ENCODE measurements at regions of chr6 and their contacts with region 1.

Region 1: DNA sequence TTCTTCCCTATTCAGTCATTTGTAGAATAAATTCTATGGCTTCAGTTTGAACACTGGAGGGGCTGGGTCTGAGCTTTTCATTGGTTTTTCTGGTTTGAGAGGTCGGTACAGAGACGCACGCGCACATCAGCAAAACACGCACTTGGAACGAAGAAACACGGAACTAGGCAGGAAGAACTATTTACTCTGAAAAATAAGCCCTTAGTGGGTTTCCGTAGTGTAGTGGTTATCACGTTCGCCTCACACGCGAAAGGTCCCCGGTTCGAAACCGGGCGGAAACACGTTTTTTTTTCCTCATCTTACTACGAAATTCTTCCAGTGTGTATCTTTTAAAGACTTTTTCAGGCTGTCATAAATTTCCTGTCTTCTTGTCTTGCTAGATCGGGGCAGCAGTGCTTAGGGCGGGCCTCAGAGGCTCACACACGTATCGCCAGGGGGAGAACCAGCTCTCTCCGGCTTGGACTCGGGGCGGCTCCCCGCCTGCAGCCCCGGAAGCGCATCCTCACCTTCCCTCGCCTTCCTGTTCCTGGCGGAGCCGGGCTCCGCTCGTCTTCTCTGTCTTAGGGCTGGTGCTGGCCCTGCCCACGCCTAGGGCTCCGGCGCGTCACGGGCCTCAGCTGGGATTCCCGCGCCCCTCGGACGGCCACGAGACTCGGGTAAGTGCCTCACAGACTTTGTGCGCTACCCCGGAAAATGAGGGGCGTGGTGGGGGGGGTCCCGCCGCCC is at the start of gene HMGN4:
- DNase-seq: peak; percentile 93
- total RNA-seq, gene HMGN4: 136 and 165 TPM in 2 replicates

Region 2: DNA sequence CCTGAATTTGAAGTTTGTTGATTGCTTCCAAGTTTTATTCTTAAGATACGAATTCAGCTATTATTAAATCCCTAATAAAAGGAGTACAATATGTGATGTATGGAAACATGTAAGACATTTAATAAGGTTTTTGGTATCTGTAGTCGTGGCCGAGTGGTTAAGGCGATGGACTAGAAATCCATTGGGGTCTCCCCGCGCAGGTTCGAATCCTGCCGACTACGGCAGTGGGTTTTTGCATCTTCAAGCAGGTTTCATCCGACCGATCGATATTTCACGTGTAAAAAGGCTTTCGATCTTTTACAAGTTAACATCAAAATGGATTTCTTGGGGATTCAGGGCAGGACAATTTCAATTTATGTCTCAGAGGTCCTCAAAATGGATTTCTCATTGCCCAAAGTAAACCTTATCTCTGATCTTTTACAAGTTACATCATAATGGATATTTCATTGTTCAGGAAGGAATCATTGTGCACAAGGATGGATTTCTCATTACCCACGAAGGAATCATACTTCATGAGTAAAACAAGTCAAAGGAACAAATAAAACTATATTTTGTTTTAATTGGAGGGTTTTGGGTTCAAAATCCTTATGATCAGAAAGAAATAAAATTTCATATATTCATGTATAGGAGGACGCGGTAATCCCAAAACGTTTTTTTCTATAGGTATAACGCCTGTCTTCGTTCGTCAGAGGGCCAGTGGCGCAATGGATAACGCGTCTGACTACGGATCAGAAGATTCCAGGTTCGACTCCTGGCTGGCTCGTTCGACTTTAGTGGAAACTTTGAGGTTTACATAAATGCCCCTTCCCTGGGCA is 210.4 kb before region 1 on chr6:
- in situ Hi-C with region 1: loop called (anchors 25 kb)
- DNase-seq: peak; percentile 92

Region 3: DNA sequence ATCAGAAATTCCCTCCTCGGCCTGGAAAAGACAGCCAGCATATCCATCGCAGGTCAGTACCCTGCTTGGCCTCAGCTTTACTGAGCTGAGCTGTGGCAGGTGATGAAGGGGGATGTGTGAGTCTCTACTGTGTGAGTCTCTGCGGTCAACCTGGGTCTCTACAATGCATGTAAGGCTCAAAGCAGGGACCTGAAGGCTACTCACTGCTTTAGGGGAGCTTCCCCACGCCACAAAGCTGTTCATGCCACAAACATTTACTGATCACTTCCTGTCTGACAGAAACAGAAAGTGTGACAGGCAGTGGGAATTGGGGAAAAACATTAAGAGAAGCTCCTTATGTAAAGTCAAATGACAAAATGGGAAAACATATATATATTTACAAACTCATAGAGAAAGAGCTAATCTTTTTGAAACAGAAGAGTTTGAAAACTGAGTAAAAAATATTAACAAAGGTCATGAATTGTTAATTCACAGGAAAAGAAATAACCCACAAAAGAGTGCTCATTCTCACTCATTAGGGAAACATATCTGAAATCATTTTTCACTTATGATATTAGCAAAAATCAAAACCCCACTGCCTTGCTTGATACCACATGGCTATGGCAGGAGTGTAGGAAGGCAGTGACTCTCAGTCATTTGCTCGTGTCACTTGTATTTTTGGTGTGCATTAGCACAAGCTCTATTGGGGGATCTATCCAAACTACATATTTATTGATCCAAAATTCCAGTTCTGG is 91.9 kb before region 1 on chr6:
- in situ Hi-C with region 1: no loop called
- DNase-seq: no peak

Measured in Caki2 (cell line).